AG04450 (cell line): ENCODE measurements at regions of chr6 and their contacts with region 1.

Region 1: GRCh38 chr6:126804332-126805064 is 314.0 kb upstream of the RSPO3 start:
- DNase-seq: peak; percentile 13
- H3K4me3 ChIP-seq: no peak overlapping the region
- H3K27ac ChIP-seq: no peak overlapping the region
- H3K27me3 ChIP-seq: no peaks in the 10 kb centered on the region
- CTCF ChIP-seq: peak; percentile 87

Region 2: GRCh38 chr6:126786262-126786661 is 18.2 kb before region 1 on chr6:
- CTCF ChIA-PET with region 1: interaction called, 12 read pairs
- POLR2A ChIA-PET with region 1: no interaction called
- DNase-seq: no peak
- H3K4me3 ChIP-seq: no peak overlapping the region
- H3K27ac ChIP-seq: no peak overlapping the region
- H3K27me3 ChIP-seq: no peaks in the 10 kb centered on the region
- CTCF ChIP-seq: no peak

Region 3: DNA sequence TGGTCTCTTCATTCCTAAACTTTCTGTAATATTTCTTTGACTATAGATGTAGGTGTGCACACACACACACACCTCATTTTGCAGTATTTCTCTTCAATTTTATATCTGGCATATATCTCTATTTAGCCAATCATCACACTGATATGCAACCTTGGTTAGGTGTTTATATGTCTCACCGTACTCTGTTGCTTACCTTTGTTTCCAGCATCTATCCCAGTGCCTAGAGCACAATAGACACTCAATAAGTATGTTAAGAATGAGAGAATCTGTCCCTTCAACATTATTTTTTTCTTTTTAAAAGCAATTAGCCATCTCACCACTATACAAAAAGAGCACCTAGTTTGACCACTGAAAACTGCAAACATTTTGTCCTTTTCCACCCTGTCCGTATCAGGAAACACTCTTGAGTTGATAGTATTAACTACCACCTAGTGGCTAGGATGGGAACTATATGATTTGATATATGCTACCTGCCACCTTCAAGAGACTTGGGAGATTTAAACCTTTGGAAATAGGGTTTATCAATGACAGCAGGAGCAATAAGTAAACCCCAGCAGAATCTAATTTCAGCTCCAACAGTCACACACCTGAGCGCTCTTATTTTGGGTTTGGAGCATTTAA is 265.3 kb after region 1 on chr6:
- CTCF ChIA-PET with region 1: interaction called, 11 read pairs
- POLR2A ChIA-PET with region 1: no interaction called
- DNase-seq: no peak
- H3K4me3 ChIP-seq: no peak overlapping the region
- H3K27ac ChIP-seq: no peak overlapping the region
- H3K27me3 ChIP-seq: no peaks in the 10 kb centered on the region
- CTCF ChIP-seq: peak; percentile 57

Region 4: GRCh38 chr6:127100510-127101140 is 296.1 kb after region 1 on chr6:
- CTCF ChIA-PET with region 1: interaction called, 13 read pairs
- POLR2A ChIA-PET with region 1: no interaction called
- DNase-seq: no peak
- H3K4me3 ChIP-seq: no peak overlapping the region
- H3K27ac ChIP-seq: no peak overlapping the region
- H3K27me3 ChIP-seq: peaks cover 2% of the 10 kb centered on the region
- CTCF ChIP-seq: peak; percentile 47

Region 5: GRCh38 chr6:127120787-127121636 is 316.5 kb after region 1 on chr6:
- CTCF ChIA-PET with region 1: interaction called, 32 read pairs
- POLR2A ChIA-PET with region 1: no interaction called
- DNase-seq: peak; percentile 29
- H3K4me3 ChIP-seq: no peak overlapping the region
- H3K27ac ChIP-seq: no peak overlapping the region
- H3K27me3 ChIP-seq: peaks cover 43% of the 10 kb centered on the region
- CTCF ChIP-seq: peak; percentile 94

Region 6: DNA sequence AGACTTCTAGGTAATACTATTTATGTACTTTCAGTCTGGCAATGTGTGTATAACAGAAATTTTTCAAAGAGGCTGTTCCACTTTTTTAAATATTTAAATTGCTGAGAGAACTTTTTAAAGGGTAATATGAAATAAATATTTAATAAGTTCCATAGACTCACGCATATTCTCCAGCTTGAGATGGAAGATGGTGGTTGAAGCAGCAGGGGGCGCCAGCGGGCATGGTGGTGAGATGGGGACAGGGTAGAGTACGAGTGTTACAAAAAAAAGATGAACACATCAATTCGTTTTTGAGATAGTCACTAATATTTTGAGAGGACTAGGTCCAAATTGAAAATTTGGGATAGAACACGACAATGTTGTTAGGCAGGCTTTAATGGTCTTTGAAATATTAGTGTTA is 382.4 kb after region 1 on chr6:
- CTCF ChIA-PET with region 1: interaction called, 14 read pairs
- POLR2A ChIA-PET with region 1: no interaction called
- DNase-seq: no peak
- H3K4me3 ChIP-seq: no peak overlapping the region
- H3K27ac ChIP-seq: no peak overlapping the region
- H3K27me3 ChIP-seq: no peaks in the 10 kb centered on the region
- CTCF ChIP-seq: peak; percentile 50